Activated CD4-positive, alpha-beta T cell treated with anti-CD3 and anti-CD28 coated beads for 36 hours (primary cell): ENCODE measurements at regions of chr16 and their contacts with region 1.

Region 1: DNA sequence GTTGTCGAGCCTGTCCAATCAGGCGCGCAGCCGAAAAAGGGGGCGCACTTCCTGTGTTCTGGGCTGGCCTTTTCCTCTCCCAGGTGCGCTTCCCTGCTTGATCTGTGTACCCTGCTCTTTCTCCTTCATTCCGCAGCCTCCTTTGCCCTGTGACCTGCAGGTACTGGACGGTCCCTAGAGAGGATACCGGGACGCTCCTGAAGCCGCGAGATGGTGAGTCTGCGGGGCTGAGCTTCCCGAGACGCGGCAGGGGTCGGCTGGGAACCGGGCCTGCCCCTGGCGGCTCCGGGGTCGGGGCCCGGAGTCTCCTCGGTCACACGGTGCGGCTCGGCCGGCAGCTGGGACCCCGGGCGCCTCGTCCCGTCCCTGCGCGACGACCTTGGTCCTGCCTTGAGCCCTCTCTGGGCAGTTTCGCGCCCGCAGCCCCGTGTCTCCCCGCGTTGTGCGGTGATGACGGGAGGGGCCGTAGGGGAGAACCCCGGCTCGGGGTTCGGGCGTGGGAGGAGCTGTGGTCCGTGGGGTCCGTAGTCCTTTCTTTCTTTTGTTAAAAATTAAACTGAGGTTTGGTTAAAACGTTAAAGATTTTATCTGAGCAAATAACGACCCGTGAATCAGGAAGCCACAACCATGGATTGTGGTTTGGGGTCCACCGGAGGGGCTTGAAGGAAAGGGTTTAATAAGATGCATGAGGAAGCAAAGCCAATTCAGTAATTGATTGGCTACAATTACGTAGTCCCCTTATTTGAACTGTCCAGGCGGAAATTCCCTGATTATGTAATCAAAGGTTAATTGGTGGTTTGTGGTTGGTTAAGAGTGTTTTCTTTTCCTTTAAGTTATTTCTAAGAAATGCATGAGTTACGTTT is 172.8 kb upstream of the ZNF267 start:
- DNase-seq: peak; percentile 94
- ATAC-seq: peak; percentile 87
- H3K4me3 Mint-ChIP-seq: peak overlapping the region; percentile 92
- H3K27ac Mint-ChIP-seq: peak overlapping the region; percentile 96
- H3K4me1 Mint-ChIP-seq: peaks cover 26% of the 10 kb centered on the region
- H3K27me3 Mint-ChIP-seq: no peaks in the 10 kb centered on the region

Region 2: GRCh38 chr16:31117391-31118197 is 583.2 kb before region 1 on chr16 and contains the start of gene KAT8:
- CTCF ChIA-PET with region 1: no interaction called
- POLR2A ChIA-PET with region 1: no interaction called
- intact Hi-C with region 1: loop called in 1 of 2 experiments (anchors 2 kb)
- DNase-seq: peak; percentile 99
- ATAC-seq: peak; percentile 93
- H3K4me3 Mint-ChIP-seq: peak within 1 kb of the TSS; percentile 88
- H3K27ac Mint-ChIP-seq: peak within 1 kb of the TSS; percentile 83
- H3K4me1 Mint-ChIP-seq: peaks cover 14% of the 10 kb centered on the region
- H3K27me3 Mint-ChIP-seq: no peaks in the 10 kb centered on the region
- total RNA-seq, gene KAT8: 53.6 to 63.1 TPM

Region 3: GRCh38 chr16:31265329-31266245 is 435.2 kb before region 1 on chr16:
- CTCF ChIA-PET with region 1: no interaction called
- POLR2A ChIA-PET with region 1: no interaction called
- intact Hi-C with region 1: loop called in 1 of 2 experiments (anchors 10 kb)
- DNase-seq: peak; percentile 91
- ATAC-seq: peak; percentile 97
- H3K4me3 Mint-ChIP-seq: peak overlapping the region; percentile 10
- H3K27ac Mint-ChIP-seq: peak overlapping the region; percentile 86
- H3K4me1 Mint-ChIP-seq: peaks cover 40% of the 10 kb centered on the region
- H3K27me3 Mint-ChIP-seq: peaks cover 6% of the 10 kb centered on the region

Region 4: GRCh38 chr16:31421587-31421986 is 279.2 kb before region 1 on chr16:
- CTCF ChIA-PET with region 1: no interaction called
- POLR2A ChIA-PET with region 1: no interaction called
- intact Hi-C with region 1: loop called in 1 of 2 experiments (anchors 1 kb)
- DNase-seq: peak; percentile 82
- ATAC-seq: peak; percentile 98
- H3K4me3 Mint-ChIP-seq: no peak overlapping the region
- H3K27ac Mint-ChIP-seq: peak overlapping the region; percentile 47
- H3K4me1 Mint-ChIP-seq: peaks cover 10% of the 10 kb centered on the region
- H3K27me3 Mint-ChIP-seq: peaks cover 6% of the 10 kb centered on the region

Region 5: DNA sequence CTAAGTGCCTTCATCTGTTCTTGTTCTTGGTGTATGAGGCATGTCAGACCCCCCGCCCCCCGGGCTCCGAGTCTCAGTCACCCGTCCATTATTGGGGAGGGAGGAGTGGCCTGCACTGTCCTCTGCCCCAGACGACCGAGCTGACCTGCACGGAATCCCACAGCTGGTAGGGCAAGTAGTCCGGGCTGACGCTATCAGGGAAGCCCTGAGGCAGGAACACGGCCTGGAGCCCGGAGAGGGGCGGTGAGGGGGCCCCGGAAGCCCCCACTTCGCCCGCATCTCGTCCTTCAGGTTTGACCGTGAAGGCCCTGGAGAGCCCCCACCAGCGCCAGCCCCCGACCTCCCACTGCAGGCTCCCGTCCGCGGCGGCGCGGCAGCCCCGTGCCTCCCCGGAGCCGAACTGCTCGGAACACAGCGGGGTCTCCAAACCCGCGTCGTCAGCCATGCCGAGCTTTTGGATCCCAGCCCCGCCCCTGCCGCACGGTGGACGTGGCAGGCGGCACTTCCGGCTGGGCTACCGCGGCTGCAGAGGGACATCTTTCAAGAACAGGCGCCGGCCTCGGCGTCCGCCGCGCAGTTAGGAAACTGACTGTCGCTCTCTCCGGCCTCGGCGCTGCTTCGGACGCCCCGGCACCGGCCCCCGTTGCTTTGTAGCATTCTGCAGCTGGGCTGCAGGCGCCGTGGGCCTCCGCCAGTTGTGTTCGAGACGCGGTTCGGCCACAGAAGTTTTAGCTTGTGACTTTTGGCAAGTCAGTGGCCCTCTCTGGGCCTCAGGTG is 192.6 kb before region 1 on chr16 and contains the start of gene RUSF1:
- CTCF ChIA-PET with region 1: no interaction called
- POLR2A ChIA-PET with region 1: no interaction called
- intact Hi-C with region 1: loop called (anchors 1 to 2 kb)
- DNase-seq: peak; percentile 94
- ATAC-seq: peak; percentile 77
- H3K4me3 Mint-ChIP-seq: peak within 1 kb of the TSS; percentile 88
- H3K27ac Mint-ChIP-seq: peak within 1 kb of the TSS; percentile 98
- H3K4me1 Mint-ChIP-seq: peaks cover 47% of the 10 kb centered on the region
- H3K27me3 Mint-ChIP-seq: no peaks in the 10 kb centered on the region
- total RNA-seq, gene RUSF1: 36.3 to 37.7 TPM

Region 6: GRCh38 chr16:31713071-31713944 is 12.6 kb after region 1 on chr16:
- CTCF ChIA-PET with region 1: interaction called, 11 read pairs
- POLR2A ChIA-PET with region 1: interaction called, 24 read pairs
- intact Hi-C with region 1: loop called (anchors 1 kb)
- DNase-seq: peak; percentile 95
- ATAC-seq: peak; percentile 91
- H3K4me3 Mint-ChIP-seq: peak overlapping the region; percentile 96
- H3K27ac Mint-ChIP-seq: peak overlapping the region; percentile 99
- H3K4me1 Mint-ChIP-seq: peaks cover 47% of the 10 kb centered on the region
- H3K27me3 Mint-ChIP-seq: no peaks in the 10 kb centered on the region

Region 7: GRCh38 chr16:31873556-31874365 is 173.0 kb after region 1 on chr16 and contains the start of gene ZNF267:
- CTCF ChIA-PET with region 1: interaction called, 6 read pairs
- POLR2A ChIA-PET with region 1: interaction called, 6 read pairs
- intact Hi-C with region 1: loop called in 1 of 2 experiments (anchors 2 kb)
- DNase-seq: peak; percentile 96
- ATAC-seq: peak; percentile 60
- H3K4me3 Mint-ChIP-seq: peak within 1 kb of the TSS; percentile 94
- H3K27ac Mint-ChIP-seq: peak within 1 kb of the TSS; percentile 97
- H3K4me1 Mint-ChIP-seq: peaks cover 73% of the 10 kb centered on the region
- H3K27me3 Mint-ChIP-seq: no peaks in the 10 kb centered on the region
- total RNA-seq, gene ZNF267: 61.9 to 64.9 TPM